ENCODE measurements at regions of chr1 and their contacts with region 1.

Region 1: GRCh38 chr1:172002725-172003345 is 161.5 kb downstream of the DNM3 start:
- DNase-seq: peak; percentile 43
- H3K4me3 ChIP-seq: no peak overlapping the region
- H3K27ac ChIP-seq: no peak overlapping the region
- H3K27me3 ChIP-seq: no peaks in the 10 kb centered on the region
- CTCF ChIP-seq: peak; percentile 89

Region 2: DNA sequence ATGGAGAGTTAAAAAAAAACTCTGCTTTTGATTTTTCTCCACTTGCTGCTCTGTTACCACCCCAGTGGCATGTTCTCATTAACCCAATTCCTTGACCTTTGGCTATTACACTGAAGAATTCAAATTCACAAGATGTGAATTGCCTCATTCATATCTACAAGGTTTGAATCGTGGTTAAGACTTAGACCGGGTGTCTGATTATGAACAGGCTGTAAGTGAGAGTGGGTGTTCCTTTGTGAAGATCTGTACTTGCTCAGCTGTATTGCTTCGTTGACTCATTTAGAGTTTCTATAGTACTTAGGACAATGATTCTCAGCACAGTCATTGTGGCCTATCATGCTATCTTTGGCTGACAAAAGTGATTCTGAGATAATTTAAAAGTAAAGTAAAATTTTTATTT is 125.1 kb before region 1 on chr1:
- CTCF ChIA-PET with region 1: no interaction called
- POLR2A ChIA-PET with region 1: no interaction called
- DNase-seq: no peak
- H3K4me3 ChIP-seq: no peak overlapping the region
- H3K27ac ChIP-seq: no peak overlapping the region
- H3K27me3 ChIP-seq: no peaks in the 10 kb centered on the region
- CTCF ChIP-seq: no peak

Region 3: GRCh38 chr1:171990371-171990770 is 12.5 kb before region 1 on chr1:
- CTCF ChIA-PET with region 1: interaction called, 31 read pairs
- POLR2A ChIA-PET with region 1: no interaction called
- DNase-seq: no peak
- H3K4me3 ChIP-seq: no peak overlapping the region
- H3K27ac ChIP-seq: no peak overlapping the region
- H3K27me3 ChIP-seq: no peaks in the 10 kb centered on the region
- CTCF ChIP-seq: no peak

Region 4: DNA sequence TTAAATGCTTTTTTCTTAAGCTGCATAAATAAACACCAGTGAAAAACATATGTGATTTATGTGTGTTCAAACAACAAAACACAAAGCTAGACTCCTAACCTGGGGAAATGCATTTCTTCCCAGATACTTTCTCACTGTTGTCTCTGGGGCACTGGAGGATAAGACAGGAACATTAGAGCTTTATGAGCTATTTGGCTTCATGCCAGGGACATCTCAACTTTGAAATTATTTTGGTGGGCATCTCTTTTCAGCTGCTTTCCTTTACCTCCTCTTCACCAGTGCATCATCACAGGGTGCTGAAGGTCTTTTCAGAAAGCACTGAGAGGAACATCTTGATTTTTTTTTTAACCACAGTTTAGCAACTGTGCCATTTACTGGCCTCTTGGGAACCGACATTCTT is 51.3 kb after region 1 on chr1:
- CTCF ChIA-PET with region 1: interaction called, 11 read pairs
- POLR2A ChIA-PET with region 1: no interaction called
- DNase-seq: no peak
- H3K4me3 ChIP-seq: no peak overlapping the region
- H3K27ac ChIP-seq: no peak overlapping the region
- H3K27me3 ChIP-seq: no peaks in the 10 kb centered on the region
- CTCF ChIP-seq: no peak

Region 5: DNA sequence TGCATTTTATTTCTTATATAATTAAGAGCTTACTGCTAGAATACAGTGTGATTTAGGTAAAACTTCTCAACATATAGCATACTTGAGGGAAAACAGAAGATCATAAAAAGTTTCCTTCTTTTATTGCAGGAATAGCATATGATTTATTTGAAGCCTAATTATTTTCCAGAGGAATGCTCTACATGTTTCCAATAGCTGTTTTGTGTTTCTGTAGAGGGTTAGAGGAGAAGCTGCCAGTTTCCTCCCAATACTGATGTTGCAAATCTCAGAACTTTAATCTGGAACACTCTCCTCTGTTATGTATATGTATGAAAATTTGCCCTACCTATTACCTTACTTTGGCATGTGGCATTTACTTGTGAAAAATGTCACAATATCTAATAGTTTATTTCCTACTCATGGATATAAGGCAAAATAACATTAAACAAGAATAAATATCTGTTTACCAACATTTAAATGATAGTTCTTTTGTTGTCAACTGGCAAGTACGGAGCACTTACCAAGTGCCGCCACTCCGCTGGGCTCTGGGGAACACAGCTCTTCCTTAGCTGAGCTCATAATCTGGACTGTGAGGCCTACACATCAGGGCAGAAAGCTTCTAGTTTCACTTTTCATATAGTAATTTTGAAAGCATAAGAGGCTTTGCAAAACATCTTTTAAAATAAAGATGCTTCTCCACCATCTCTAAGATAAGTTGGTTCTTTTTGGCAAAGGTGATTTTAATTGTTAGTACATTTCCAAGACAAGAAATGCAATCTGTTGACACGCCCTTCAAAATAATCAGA is 177.9 kb after region 1 on chr1:
- CTCF ChIA-PET with region 1: interaction called, 13 read pairs
- POLR2A ChIA-PET with region 1: no interaction called
- DNase-seq: no peak
- H3K4me3 ChIP-seq: peak overlapping the region; percentile 27
- H3K27ac ChIP-seq: peak overlapping the region; percentile 77
- H3K27me3 ChIP-seq: no peaks in the 10 kb centered on the region
- CTCF ChIP-seq: no peak

Region 6: DNA sequence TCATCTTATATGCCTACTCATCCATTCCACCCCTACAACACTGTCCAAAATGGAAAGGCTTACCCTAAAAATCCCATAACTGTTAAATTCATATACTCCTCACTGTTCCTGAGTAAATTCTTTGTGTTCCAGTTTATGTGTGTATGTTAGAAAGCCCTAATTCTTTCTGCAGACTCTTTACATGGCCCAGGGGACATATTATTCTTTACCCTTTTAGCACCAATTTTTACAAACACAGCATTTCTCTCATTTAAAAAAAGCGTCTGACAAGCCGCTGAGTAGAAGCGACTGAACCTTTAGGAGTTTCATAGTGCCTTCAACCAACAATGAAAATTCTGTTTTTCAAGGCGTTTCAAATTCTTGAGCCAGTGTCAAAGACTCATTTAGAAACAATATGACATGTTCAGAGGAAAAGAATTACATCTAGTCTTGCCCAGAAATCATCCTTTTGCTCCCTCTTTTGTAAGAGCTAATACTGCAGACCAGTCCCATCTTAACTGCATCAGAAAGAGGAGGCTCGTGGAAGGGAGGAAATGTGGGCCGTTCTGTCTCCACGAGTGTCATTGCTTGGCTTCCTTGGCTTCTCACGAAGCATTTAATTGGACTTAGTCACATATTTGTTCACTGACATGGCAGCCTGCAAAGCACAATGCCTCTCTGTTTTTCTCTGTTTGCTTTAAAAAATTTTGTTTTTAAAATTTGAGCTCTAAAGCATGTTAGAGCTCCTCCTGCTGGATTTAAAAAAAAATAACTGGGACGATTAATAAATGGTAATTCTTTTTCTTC is 396.3 kb after region 1 on chr1:
- CTCF ChIA-PET with region 1: interaction called, 199 read pairs
- POLR2A ChIA-PET with region 1: no interaction called
- DNase-seq: peak; percentile 70
- H3K4me3 ChIP-seq: no peak overlapping the region
- H3K27ac ChIP-seq: no peak overlapping the region
- H3K27me3 ChIP-seq: no peaks in the 10 kb centered on the region
- CTCF ChIP-seq: peak; percentile 58

Region 7: DNA sequence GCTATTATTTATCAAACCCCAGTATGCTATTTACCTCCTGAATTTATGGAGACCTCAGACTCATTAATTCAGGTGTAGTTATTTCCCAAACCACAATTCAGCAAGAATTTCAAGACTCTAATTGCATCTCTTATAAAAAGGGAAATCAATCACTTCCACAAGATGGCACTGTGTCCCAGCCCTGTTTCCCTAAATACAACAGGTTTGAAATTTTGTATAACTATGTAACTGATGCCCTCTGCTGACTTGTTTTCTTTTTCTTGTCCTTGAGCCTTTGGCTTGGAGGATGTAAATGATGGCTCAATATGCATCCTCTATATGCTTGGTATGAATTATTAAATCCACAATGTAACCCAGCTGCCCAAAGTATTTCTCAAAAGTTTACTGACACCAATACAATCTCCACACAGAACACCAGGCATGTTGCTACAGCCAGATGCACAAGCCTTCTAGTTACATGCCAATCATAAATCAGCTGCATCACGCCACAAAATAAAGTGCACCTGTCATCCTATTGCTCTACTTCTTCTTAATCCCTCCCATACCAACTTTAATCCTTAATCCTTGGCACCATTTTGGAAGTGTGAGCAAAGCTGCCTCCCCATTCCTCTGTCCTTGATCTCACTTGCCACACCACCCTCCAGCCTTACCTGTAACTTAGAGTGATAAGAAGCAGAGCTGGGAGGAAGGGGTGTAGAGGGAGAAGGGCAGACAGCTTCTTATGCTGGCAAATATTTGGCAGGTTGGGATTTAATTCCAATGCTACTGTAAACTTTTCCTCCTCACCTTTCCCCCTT is 426.7 kb after region 1 on chr1:
- CTCF ChIA-PET with region 1: interaction called, 58 read pairs
- POLR2A ChIA-PET with region 1: no interaction called
- DNase-seq: no peak
- H3K4me3 ChIP-seq: no peak overlapping the region
- H3K27ac ChIP-seq: no peak overlapping the region
- H3K27me3 ChIP-seq: no peaks in the 10 kb centered on the region
- CTCF ChIP-seq: peak; percentile 72

Measured in AG04450 (cell line).